Endothelial cell of umbilical vein (primary cell): ENCODE measurements at regions of chr2 and their contacts with region 1.

Region 1: DNA sequence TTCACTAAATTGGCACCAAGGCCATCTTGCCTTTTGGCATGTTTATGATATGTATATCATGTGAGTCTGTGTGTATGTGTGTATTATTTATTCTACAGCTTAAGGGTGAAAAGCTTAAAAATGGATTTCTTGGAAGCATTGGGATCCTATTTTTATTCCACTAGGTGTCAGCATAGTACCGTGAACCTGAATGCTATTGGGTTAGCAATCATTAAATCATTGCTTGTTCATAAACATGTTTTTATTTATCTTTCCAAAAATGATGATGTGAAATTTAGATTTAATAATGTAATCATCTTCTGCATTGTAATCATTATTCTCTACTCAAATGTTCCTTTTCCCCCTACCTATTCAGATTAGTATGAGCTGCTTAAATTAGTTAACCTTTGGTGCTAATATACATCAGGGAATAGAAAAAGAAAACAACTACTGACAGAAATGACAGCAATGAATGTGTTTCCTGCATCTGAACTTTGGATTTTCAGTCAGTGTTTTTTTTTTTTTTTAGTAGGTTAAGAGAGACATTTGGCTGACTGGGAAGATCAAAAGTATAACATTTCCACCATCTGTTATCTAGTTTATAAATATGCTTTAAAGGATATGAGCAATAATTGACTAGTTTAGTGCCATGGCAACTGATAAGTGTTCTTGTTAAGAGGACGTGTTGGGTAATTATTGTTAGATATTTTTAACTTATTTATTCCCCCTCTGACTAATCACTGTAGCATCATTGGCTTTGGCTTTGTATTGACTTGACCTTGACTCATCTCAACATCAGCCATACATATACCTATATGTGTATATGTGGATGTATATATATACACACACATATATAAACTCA is 14.1 kb upstream of the ZSWIM2 start:
- DNase-seq: peak; percentile 85
- H3K4me3 ChIP-seq: no peak overlapping the region
- H3K27ac ChIP-seq: peak overlapping the region; percentile 39
- H3K4me1 ChIP-seq: peaks cover 16% of the 10 kb centered on the region
- H3K27me3 ChIP-seq: no peaks in the 10 kb centered on the region
- CTCF ChIP-seq: peak; percentile 36 to 53
- POLR2A ChIP-seq: no peak

Region 2: DNA sequence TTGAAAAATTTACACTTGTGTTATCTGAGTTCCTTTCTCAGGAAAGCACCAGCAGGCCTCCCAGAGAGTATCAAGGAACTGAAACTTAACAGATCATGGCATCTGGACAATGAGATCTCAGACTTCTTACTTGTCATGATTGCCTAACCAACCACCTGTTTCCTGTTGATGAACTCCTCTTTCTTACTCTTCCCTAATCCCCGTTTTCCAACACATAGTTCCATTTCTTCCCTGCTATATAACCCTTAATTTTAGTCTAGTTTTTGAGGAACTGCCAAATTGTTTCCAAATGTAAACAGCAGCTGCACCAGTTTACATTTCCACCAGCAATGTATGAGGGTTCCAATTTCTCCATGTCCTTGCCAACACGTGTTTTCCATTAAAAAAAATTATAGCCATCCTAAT is 175.3 kb before region 1 on chr2:
- CTCF ChIA-PET with region 1: no interaction called
- POLR2A ChIA-PET with region 1: no interaction called
- dilution Hi-C with region 1: no loop called
- intact Hi-C with region 1: no loop called
- DNase-seq: peak; percentile 13
- H3K4me3 ChIP-seq: no peak overlapping the region
- H3K27ac ChIP-seq: no peak overlapping the region
- H3K4me1 ChIP-seq: no peaks in the 10 kb centered on the region
- H3K27me3 ChIP-seq: no peaks in the 10 kb centered on the region
- CTCF ChIP-seq: no peak
- POLR2A ChIP-seq: no peak

Region 3: DNA sequence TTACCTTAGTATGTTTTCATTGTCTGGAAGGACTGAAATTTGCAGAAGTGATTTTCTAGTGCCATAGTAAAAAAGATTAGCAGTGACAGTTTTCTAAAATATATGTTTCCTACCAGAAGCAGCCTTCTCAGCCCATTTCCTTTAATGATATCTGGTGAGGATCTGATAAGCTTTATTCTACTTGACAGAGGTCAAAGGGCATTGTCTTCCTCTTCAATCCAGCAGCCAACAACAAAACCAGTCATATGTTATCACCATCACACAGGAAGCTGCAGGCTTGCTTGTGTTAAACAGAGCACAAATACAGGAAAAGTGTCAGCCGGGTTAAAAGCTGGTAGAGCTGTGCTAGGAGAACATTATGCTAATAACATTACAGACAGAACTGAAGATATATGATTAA is 21.5 kb after region 1 on chr2:
- CTCF ChIA-PET with region 1: interaction called, 14 read pairs
- POLR2A ChIA-PET with region 1: no interaction called
- dilution Hi-C with region 1: no loop called
- intact Hi-C with region 1: loop called (anchors 1 kb)
- DNase-seq: peak; percentile 98
- H3K4me3 ChIP-seq: no peak overlapping the region
- H3K27ac ChIP-seq: peak overlapping the region; percentile 71
- H3K4me1 ChIP-seq: peaks cover 55% of the 10 kb centered on the region
- H3K27me3 ChIP-seq: no peaks in the 10 kb centered on the region
- CTCF ChIP-seq: no peak
- POLR2A ChIP-seq: peak; percentile 86

Region 4: DNA sequence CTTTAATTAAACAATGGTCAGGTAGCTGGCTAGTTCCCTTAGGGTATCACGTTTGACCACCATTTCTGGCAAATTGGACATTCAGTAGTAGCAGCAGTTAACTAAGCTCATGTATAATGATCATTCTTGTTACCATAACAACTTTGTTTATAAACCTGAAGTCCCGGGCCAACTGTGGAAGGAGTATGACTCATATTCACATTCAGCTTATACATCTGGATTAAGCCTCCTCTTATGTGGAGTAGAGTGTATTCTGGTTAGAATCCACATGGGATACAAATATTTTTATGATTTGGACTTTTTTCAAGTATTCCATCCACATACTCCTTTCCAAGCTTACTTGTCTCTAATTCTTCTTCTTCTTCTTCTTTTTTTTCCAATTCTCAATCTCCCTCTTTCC is 56.2 kb after region 1 on chr2:
- CTCF ChIA-PET with region 1: interaction called, 10 read pairs
- POLR2A ChIA-PET with region 1: no interaction called
- dilution Hi-C with region 1: no loop called
- intact Hi-C with region 1: no loop called
- DNase-seq: peak; percentile 82
- H3K4me3 ChIP-seq: no peak overlapping the region
- H3K27ac ChIP-seq: no peak overlapping the region
- H3K4me1 ChIP-seq: peaks cover 5% of the 10 kb centered on the region
- H3K27me3 ChIP-seq: no peaks in the 10 kb centered on the region
- CTCF ChIP-seq: no peak
- POLR2A ChIP-seq: no peak

Region 5: GRCh38 chr2:186968277-186968676 is 105.2 kb after region 1 on chr2:
- CTCF ChIA-PET with region 1: no interaction called
- POLR2A ChIA-PET with region 1: no interaction called
- dilution Hi-C with region 1: no loop called
- intact Hi-C with region 1: no loop called
- DNase-seq: no peak
- H3K4me3 ChIP-seq: no peak overlapping the region
- H3K27ac ChIP-seq: no peak overlapping the region
- H3K4me1 ChIP-seq: no peaks in the 10 kb centered on the region
- H3K27me3 ChIP-seq: no peaks in the 10 kb centered on the region
- CTCF ChIP-seq: no peak
- POLR2A ChIP-seq: no peak

Region 6: GRCh38 chr2:187263675-187264560 is 400.8 kb after region 1 on chr2:
- CTCF ChIA-PET with region 1: interaction called, 3 read pairs
- POLR2A ChIA-PET with region 1: no interaction called
- dilution Hi-C with region 1: no loop called
- intact Hi-C with region 1: loop called (anchors 1 kb)
- DNase-seq: peak; percentile 94
- H3K4me3 ChIP-seq: peak overlapping the region in 2 of 3 experiments; percentile 9 to 45
- H3K27ac ChIP-seq: peak overlapping the region; percentile 96
- H3K4me1 ChIP-seq: peaks cover 36% of the 10 kb centered on the region
- H3K27me3 ChIP-seq: no peaks in the 10 kb centered on the region
- CTCF ChIP-seq: no peak
- POLR2A ChIP-seq: peak; percentile 92

Region 7: GRCh38 chr2:187274146-187274545 is 411.1 kb after region 1 on chr2:
- CTCF ChIA-PET with region 1: no interaction called
- POLR2A ChIA-PET with region 1: no interaction called
- dilution Hi-C with region 1: no loop called
- intact Hi-C with region 1: no loop called
- DNase-seq: no peak
- H3K4me3 ChIP-seq: no peak overlapping the region
- H3K27ac ChIP-seq: no peak overlapping the region
- H3K4me1 ChIP-seq: no peaks in the 10 kb centered on the region
- H3K27me3 ChIP-seq: no peaks in the 10 kb centered on the region
- CTCF ChIP-seq: no peak
- POLR2A ChIP-seq: no peak

Region 8: DNA sequence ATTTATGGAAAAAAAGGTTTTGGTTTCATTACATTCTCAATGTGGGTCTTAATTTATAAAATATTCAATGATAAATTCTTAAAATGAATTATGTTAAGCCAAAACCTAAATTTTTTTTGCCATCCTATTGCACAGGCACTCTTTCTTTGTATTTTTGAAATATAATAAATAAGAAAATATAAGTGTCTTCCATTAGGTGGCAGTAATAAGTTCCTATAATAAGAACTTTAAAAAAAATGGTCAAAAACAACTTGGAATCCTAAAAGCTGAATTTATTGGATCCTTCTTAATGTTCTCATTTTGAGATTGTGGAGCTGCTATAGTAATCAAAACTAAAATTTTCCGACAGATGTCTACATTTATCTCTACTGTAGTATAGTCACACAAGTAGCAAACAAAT is 579.3 kb after region 1 on chr2:
- CTCF ChIA-PET with region 1: interaction called, 58 read pairs
- POLR2A ChIA-PET with region 1: interaction called, 9 read pairs
- dilution Hi-C with region 1: no loop called
- intact Hi-C with region 1: no loop called
- DNase-seq: no peak
- H3K4me3 ChIP-seq: peak overlapping the region in 2 of 3 experiments; percentile 60 to 100
- H3K27ac ChIP-seq: peak overlapping the region; percentile 88
- H3K4me1 ChIP-seq: peaks cover 68% of the 10 kb centered on the region
- H3K27me3 ChIP-seq: no peaks in the 10 kb centered on the region
- CTCF ChIP-seq: no peak
- POLR2A ChIP-seq: no peak

Region 9: DNA sequence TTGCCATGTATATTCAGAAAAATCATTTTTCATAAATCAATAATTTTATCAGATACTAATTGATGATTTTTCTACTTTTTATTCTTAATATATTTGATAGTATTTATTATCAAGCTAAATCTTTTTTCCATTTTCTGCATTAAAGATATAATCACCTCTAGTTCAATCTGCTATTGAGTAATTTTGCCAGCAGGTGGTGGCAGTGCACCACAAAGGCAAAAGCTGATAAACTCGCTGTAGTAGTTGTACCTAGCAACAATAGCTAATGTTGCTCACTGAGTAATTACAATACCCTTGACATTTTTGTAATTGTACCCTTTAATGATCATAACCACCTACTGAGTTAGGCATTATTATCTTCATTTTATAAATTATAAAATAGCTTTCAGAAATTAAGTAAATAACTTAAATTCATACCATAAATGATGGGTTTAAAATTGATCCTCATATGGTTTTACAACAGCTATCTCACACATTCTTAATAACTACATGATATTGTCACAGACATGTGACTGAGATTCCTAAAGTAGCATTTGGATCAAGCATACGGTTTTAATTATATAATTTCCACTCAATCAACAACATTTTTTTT is 636.9 kb after region 1 on chr2:
- CTCF ChIA-PET with region 1: interaction called, 22 read pairs
- POLR2A ChIA-PET with region 1: no interaction called
- dilution Hi-C with region 1: no loop called
- intact Hi-C with region 1: no loop called
- DNase-seq: peak; percentile 75
- H3K4me3 ChIP-seq: no peak overlapping the region
- H3K27ac ChIP-seq: peak overlapping the region; percentile 19
- H3K4me1 ChIP-seq: peaks cover 50% of the 10 kb centered on the region
- H3K27me3 ChIP-seq: no peaks in the 10 kb centered on the region
- CTCF ChIP-seq: peak; percentile 48 to 58
- POLR2A ChIP-seq: no peak